Ovary (tissue), 10 donors: ENCODE measurements at regions of chr2 and their contacts with region 1.

Region 1: DNA sequence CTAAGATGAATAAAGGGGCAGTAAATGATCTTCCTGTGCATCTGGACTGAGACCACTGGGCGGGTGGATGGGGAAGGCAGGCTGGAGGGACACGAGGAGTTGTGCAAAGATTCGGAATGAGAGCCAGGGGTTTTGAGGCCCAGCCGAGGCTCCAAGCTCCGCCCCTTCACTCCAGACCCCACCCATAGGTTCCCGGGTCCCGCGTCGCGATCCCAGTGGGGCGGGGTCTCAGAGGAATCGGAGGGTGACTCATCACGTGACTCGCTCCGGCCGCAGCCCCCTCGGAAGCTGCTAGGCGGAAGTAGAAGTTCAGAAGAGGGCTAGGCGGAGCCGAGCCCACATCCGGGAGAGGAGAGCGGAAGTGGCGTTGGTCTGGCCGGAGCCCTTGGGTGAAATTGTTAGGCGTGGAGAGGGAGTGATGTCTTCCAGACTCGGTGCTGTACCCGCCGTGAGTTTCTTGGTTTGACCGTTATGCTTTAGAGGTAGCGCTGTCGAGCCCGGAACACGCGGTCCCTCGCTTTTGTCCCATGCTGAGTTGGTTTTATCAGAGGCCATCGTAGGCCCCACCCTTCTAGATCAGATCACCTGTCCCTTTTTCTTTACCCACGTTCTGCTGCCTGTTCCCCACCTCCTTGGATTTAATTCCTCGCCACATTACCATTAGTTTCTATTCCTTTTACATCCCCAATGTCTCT is at the start of gene ZNF512:
- DNase-seq: peak; percentile 95 to 97 (median 96)
- H3K4me3 ChIP-seq: peak within 1 kb of the TSS; percentile 67
- H3K27ac ChIP-seq: peak within 1 kb of the TSS; percentile 42 to 66
- H3K4me1 ChIP-seq: peaks cover 8% of the 10 kb centered on the region
- H3K27me3 ChIP-seq: no peaks in the 10 kb centered on the region
- CTCF ChIP-seq: no peak
- EP300 ChIP-seq: no peak
- POLR2A ChIP-seq: peak; percentile 76
- total RNA-seq, gene ZNF512: 40.2 to 69.3 (median 53.4) TPM

Region 2: DNA sequence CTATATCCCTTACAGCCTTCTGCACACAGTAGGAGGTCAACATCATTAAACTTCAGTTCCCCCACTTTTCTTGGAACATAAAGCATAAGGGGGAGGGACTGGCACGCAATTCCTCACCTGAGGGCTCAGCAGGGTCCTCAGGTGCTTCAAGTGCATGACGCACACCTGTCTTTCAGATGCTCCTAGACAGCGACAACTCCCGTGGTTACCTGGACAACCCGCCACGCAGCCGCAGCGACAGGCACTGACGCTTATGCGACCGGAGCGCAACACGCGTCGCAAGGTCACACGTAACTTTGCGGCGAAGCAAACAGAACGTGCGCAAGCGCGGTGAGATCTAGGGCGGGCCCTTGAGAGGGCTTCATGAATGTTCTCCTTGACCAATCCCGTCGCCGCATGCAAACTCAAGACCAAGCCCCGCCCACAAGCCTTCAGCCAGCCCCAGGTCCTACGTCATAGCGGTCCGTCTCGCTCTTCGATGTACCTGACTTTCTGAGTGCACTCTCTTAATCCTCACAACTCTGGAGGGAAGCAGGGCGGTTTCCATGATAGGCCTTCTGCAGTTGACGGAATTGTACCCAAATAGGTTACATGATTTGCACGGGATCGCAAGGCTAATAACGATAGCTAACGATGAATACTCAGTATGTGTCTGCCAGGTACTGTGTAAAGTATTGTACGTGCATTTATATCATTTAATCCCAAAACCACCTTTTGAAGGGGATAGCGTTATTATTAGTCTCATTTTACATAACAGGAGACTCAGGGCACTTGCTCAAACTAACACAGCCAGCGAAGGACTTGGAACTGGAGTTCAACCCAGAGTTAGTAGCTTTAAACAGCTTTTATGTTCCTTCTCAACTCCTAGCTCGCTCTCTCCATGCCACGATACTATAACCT is 93.1 kb before region 1 on chr2 and contains the start of gene IFT172:
- intact Hi-C with region 1: loop called in 1 of 4 experiments (anchors 10 kb)
- DNase-seq: peak; percentile 96 to 99 (median 98)
- H3K4me3 ChIP-seq: peak within 1 kb of the TSS; percentile 67
- H3K27ac ChIP-seq: peak within 1 kb of the TSS; percentile 55 to 77
- H3K4me1 ChIP-seq: peaks cover 5% of the 10 kb centered on the region
- H3K27me3 ChIP-seq: no peaks in the 10 kb centered on the region
- CTCF ChIP-seq: no peak
- EP300 ChIP-seq: no peak
- POLR2A ChIP-seq: peak; percentile 79
- total RNA-seq, gene IFT172: 37.0 to 52.1 (median 43.9) TPM